Lower leg skin (tissue), 4 donors: ENCODE measurements at regions of chr17 and their contacts with region 1.

Region 1: GRCh38 chr17:29807520-29808351 is 122.3 kb downstream of the SSH2 start:
- DNase-seq: peak in 1 of 2 donors; percentile 59
- H3K4me3 ChIP-seq: no peak overlapping the region
- CTCF ChIP-seq: peak in 1 of 3 donors; percentile 44
- POLR2A ChIP-seq: no peak

Region 2: DNA sequence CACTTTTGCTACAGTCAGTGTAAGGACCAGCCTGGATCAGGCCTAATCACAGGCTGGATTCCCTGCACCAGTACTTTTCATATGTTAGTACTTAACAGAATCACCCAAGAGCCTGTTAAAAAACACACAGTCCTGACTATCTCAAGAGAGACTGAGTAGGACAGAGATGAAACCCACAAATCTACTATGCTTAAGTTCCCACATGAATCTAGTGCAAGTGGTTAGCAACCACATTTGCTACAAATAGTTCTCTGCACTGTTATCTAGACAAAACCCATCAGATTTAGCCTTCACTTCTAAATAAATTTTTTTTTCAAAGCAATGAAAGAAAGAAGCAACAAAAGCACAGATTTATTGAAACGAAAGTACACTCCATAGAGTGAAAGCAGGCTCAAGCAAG is 83.4 kb after region 1 on chr17:
- intact Hi-C with region 1: no loop called
- DNase-seq: no peak
- H3K4me3 ChIP-seq: no peak overlapping the region
- CTCF ChIP-seq: no peak
- POLR2A ChIP-seq: no peak

Region 3: GRCh38 chr17:29931231-29931932 is 123.6 kb after region 1 on chr17:
- intact Hi-C with region 1: loop called (anchors 5 kb)
- DNase-seq: peak in 1 of 2 donors; percentile 68
- H3K4me3 ChIP-seq: no peak overlapping the region
- CTCF ChIP-seq: peak in 1 of 3 donors; percentile 12
- POLR2A ChIP-seq: no peak

Region 4: GRCh38 chr17:30021708-30022317 is 214.1 kb after region 1 on chr17:
- intact Hi-C with region 1: loop called (anchors 5 kb)
- DNase-seq: peak in 1 of 2 donors; percentile 23
- H3K4me3 ChIP-seq: no peak overlapping the region
- CTCF ChIP-seq: no peak
- POLR2A ChIP-seq: no peak